Caco-2 (cell line): ENCODE measurements at regions of chr7 and their contacts with region 1.

Region 1: DNA sequence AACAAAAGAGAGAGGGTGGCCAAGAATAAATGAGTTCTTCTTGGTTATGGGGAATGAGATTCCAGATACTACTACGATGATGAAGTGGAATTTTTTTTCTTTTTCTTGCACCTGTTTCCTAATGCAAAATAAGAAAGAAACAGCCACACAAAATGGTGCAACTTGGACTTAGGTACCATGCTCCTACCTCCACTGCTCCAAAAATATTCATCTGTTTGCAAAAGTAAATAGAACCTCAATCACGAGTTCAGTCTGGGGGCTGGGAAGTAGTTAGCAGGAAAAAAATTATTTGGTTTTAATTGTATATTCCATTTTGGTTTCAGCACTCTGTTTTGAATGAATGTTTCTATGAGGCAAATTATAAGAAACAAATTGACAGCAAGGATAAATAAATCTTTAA is 73.5 kb downstream of the SLC25A13 start:
- DNase-seq: no peak
- H3K4me3 ChIP-seq: no peak overlapping the region
- H3K4me3 Mint-ChIP-seq: no peak overlapping the region
- H3K27ac Mint-ChIP-seq: no peak overlapping the region
- H3K4me1 ChIP-seq: no peaks in the 10 kb centered on the region
- H3K4me1 Mint-ChIP-seq: no peaks in the 10 kb centered on the region
- H3K27me3 ChIP-seq: no peaks in the 10 kb centered on the region
- H3K27me3 Mint-ChIP-seq: no peaks in the 10 kb centered on the region
- CTCF ChIP-seq: no peak

Region 2: GRCh38 chr7:95899919-95900513 is 348.4 kb before region 1 on chr7:
- CTCF ChIA-PET with region 1: no interaction called
- POLR2A ChIA-PET with region 1: no interaction called
- intact Hi-C with region 1: no loop called
- DNase-seq: peak in 1 of 2 experiments; percentile 5
- H3K4me3 ChIP-seq: no peak overlapping the region
- H3K4me3 Mint-ChIP-seq: no peak overlapping the region
- H3K27ac Mint-ChIP-seq: no peak overlapping the region
- H3K4me1 ChIP-seq: no peaks in the 10 kb centered on the region
- H3K4me1 Mint-ChIP-seq: no peaks in the 10 kb centered on the region
- H3K27me3 ChIP-seq: no peaks in the 10 kb centered on the region
- H3K27me3 Mint-ChIP-seq: no peaks in the 10 kb centered on the region
- CTCF ChIP-seq: peak in 1 of 2 experiments; percentile 15

Region 3: DNA sequence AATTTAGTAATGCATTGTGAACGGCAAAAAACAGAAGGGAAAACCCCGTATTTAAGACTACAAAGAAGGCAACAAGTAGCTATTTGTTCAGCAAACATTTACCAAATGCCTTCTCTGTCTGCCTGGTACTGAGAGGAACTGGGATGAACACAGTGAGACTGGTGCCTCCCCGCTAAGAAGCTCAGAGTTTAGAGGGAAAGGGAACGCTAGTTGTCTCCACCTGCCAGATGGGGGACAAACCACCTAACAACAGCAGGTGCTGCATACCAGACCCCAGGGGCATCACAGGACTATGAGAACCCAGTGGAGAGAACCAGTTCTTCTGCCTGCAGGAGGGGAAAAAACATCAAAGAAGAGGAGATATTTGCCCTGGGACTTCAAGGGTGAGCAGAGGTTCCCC is 73.6 kb before region 1 on chr7:
- CTCF ChIA-PET with region 1: no interaction called
- POLR2A ChIA-PET with region 1: no interaction called
- intact Hi-C with region 1: loop called (anchors 2 kb)
- DNase-seq: peak; percentile 84 to 85
- H3K4me3 ChIP-seq: no peak overlapping the region
- H3K4me3 Mint-ChIP-seq: peak overlapping the region; percentile 34
- H3K27ac Mint-ChIP-seq: peak overlapping the region; percentile 82
- H3K4me1 ChIP-seq: peaks cover 73% of the 10 kb centered on the region
- H3K4me1 Mint-ChIP-seq: peaks cover 54% of the 10 kb centered on the region
- H3K27me3 ChIP-seq: no peaks in the 10 kb centered on the region
- H3K27me3 Mint-ChIP-seq: no peaks in the 10 kb centered on the region
- CTCF ChIP-seq: peak in 1 of 2 experiments; percentile 14